ENCODE measurements at regions of chr18 and their contacts with region 1.

Region 1: DNA sequence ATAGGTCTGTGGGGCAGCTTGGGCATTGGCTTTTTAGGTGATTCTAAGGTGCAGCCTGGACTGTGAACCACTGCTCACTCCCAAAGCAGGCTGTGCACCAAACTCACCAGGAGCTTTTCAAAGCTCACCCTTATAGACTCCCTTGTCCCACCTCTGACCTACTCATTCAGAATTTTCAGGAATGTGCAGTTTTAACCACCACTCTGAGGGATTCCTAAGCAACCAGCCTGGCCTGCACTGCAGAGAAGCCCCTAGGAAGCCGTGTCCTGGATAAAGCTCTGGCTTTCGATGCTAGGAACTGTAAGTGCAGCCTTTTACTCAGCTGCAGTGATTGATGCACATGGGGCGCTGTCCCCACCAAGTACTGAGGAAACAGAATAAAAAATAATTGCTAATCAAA is 33.0 kb downstream of the MRO start:
- DNase-seq: peak; percentile 50
- H3K4me3 ChIP-seq: no peak overlapping the region
- H3K27ac ChIP-seq: no peak overlapping the region
- H3K4me1 ChIP-seq: no peaks in the 10 kb centered on the region
- H3K27me3 ChIP-seq: no peaks in the 10 kb centered on the region
- CTCF ChIP-seq: no peak
- EP300 ChIP-seq: no peak
- POLR2A ChIP-seq: no peak

Region 2: GRCh38 chr18:50508228-50508627 is 278.6 kb before region 1 on chr18:
- intact Hi-C with region 1: loop called (anchors 1 kb)
- DNase-seq: no peak
- H3K4me3 ChIP-seq: no peak overlapping the region
- H3K27ac ChIP-seq: no peak overlapping the region
- H3K4me1 ChIP-seq: no peaks in the 10 kb centered on the region
- H3K27me3 ChIP-seq: no peaks in the 10 kb centered on the region
- CTCF ChIP-seq: no peak
- EP300 ChIP-seq: no peak
- POLR2A ChIP-seq: no peak

Region 3: GRCh38 chr18:50662177-50662576 is 124.7 kb before region 1 on chr18:
- intact Hi-C with region 1: loop called (anchors 10 kb)
- DNase-seq: no peak
- H3K4me3 ChIP-seq: no peak overlapping the region
- H3K27ac ChIP-seq: peak overlapping the region in 1 of 4 donors; percentile 39
- H3K4me1 ChIP-seq: peaks cover 25 to 39% (median 33%) of the 10 kb centered on the region in 4 donors
- H3K27me3 ChIP-seq: no peaks in the 10 kb centered on the region
- CTCF ChIP-seq: peak in 1 of 3 experiments; percentile 20
- EP300 ChIP-seq: no peak
- POLR2A ChIP-seq: no peak

Region 4: GRCh38 chr18:51020536-51020935 is 233.7 kb after region 1 on chr18:
- intact Hi-C with region 1: no loop called
- DNase-seq: no peak
- H3K4me3 ChIP-seq: no peak overlapping the region
- H3K27ac ChIP-seq: no peak overlapping the region
- H3K4me1 ChIP-seq: peaks cover 0 to under 1% (median 0%) of the 10 kb centered on the region in 4 donors
- H3K27me3 ChIP-seq: no peaks in the 10 kb centered on the region
- CTCF ChIP-seq: no peak
- EP300 ChIP-seq: no peak
- POLR2A ChIP-seq: no peak

Measured in esophagus muscularis mucosa (tissue), 4 donors.